ENCODE measurements at regions of chr2 and their contacts with region 1.

Region 1: GRCh38 chr2:42102024-42102590 is 54.3 kb downstream of the PKDCC start:
- ATAC-seq: peak in 7 of 8 experiments; percentile 42 to 82 (median 67)
- H3K4me3 ChIP-seq: no peak overlapping the region
- H3K27ac ChIP-seq: peak overlapping the region; percentile 5 to 72
- H3K4me1 ChIP-seq: peaks cover 12 to 15% of the 10 kb centered on the region in 2 donors

Region 2: GRCh38 chr2:42314892-42315467 is 212.9 kb after region 1 on chr2:
- in situ Hi-C with region 1: loop called in 1 of 9 experiments (anchors 25 kb)
- ATAC-seq: peak in 2 of 8 experiments; percentile 29 to 49
- H3K4me3 ChIP-seq: no peak overlapping the region
- H3K27ac ChIP-seq: no peak overlapping the region
- H3K4me1 ChIP-seq: no peaks in the 10 kb centered on the region

Region 3: DNA sequence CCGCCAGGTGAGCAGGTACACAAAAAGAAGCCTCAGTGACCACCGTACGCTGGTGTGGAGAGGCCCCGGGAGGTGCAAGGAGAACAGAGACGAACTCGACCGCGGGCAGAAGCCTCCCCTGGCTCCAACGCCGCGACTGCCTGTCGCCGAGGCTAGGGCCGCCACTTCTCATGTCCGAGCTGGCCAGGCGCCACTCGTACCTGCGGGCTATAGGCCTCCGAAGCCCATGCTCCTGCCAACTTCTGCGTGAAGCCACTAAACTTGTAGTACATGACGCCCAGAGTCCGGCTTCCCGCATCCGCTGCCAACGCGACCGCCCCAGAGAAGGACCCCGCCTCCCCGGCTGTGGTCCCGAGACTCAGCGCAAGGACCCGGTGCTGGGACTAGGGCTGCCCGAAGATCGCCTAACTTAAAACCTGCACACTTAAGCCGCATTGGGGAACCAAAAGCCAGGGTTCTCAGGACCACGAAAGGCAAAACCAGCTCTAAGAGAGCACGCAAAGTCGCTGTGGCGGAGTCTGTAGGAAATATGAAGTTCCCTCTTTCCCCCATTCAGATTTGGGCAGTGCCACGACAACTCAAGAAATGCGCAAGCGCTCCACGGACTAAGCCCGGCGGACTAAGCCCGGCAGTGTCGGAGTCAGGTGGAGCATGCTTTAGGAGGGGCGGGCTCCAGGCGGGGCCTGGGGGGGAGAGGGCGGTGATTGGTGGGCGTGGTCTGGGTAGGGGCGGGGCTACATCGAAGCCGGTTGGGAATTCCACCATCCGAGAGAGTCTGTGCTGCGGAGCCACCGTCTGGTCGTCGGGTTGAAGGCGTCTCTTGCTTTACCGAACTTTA is 259.0 kb after region 1 on chr2 and contains the start of gene COX7A2L:
- in situ Hi-C with region 1: loop called in 1 of 9 experiments (anchors 25 kb)
- ATAC-seq: peak; percentile 84 to 96 (median 94)
- H3K4me3 ChIP-seq: peak within 1 kb of the TSS; percentile 74 to 98 (median 82)
- H3K27ac ChIP-seq: peak within 1 kb of the TSS; percentile 97 to 98
- H3K4me1 ChIP-seq: peaks cover 12 to 22% of the 10 kb centered on the region in 2 donors
- total RNA-seq, gene COX7A2L: 97.5 to 299 (median 176) TPM